ENCODE measurements at regions of chr11 and their contacts with region 1.

Region 1: GRCh38 chr11:72814286-72815109 is at the start of gene ATG16L2:
- DNase-seq: no peak
- H3K4me3 ChIP-seq: peak within 1 kb of the TSS; percentile 68 to 89 (median 75)
- H3K27ac ChIP-seq: peak within 1 kb of the TSS; percentile 77
- H3K4me1 ChIP-seq: peaks cover 23% of the 10 kb centered on the region
- H3K27me3 ChIP-seq: no peaks in the 10 kb centered on the region
- CTCF ChIP-seq: peak in 1 of 3 experiments; percentile 8
- polyA plus RNA-seq, gene ATG16L2: 8.0 to 18.3 TPM (median 9.9 TPM) in 3 replicates

Region 2: GRCh38 chr11:72752088-72752914 is 62.2 kb before region 1 on chr11 and contains the start of gene ARAP1:
- dilution Hi-C with region 1: loop called (anchors 10 kb)
- DNase-seq: peak; percentile 84
- H3K4me3 ChIP-seq: peak within 1 kb of the TSS; percentile 71 to 96 (median 90)
- H3K27ac ChIP-seq: peak within 1 kb of the TSS; percentile 61
- H3K4me1 ChIP-seq: peaks cover 24% of the 10 kb centered on the region
- H3K27me3 ChIP-seq: no peaks in the 10 kb centered on the region
- CTCF ChIP-seq: no peak
- polyA plus RNA-seq, gene ARAP1: 32.8 to 41.4 TPM (median 36.1 TPM) in 3 replicates